SK-N-SH (cell line): ENCODE measurements at regions of chr11 and their contacts with region 1.

Region 1: DNA sequence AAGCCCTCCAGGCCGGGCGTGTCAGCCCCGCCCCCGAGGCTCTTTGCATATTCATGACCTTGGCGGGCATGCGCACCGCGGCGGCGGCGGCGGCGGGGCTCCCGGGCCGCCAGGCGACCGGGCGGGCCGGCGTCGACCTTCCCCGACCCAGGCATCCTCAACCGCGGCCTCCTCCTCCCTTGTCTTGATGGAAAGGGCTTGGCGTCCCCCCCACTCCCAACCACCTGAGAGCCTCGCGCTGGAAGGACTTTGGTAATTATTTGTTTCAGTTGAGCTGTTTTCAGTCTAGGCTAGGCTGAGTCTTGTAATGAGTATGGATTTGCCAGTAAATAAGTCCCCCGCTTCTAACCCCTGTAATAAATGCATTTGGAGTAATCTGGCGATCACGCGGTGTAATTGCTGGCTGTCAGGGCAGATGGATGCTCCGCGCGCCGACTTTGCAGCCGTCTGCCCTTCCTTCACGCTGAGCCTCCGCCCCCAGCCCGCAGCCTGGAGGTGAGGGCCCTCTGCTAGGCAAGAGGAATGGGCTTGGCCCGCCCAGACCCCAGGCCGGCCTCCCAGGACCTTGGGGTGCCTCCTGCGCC is 25.2 kb downstream of the FLRT1 start:
- DNase-seq: peak; percentile 81
- H3K4me3 ChIP-seq: peak overlapping the region; percentile 51 to 61
- H3K27ac ChIP-seq: peak overlapping the region in 1 of 2 experiments; percentile 98; a peak in 2 of 4 replicates
- H3K4me1 ChIP-seq: peaks cover 4 to 89% of the 10 kb centered on the region in 2 experiments; a peak in 3 of 4 replicates
- H3K27me3 ChIP-seq: no peaks in the 10 kb centered on the region
- CTCF ChIP-seq: no peak
- EP300 ChIP-seq: peak in 1 of 2 experiments; percentile 61; a peak in 2 of 4 replicates
- RAD21 ChIP-seq: no peak

Region 2: DNA sequence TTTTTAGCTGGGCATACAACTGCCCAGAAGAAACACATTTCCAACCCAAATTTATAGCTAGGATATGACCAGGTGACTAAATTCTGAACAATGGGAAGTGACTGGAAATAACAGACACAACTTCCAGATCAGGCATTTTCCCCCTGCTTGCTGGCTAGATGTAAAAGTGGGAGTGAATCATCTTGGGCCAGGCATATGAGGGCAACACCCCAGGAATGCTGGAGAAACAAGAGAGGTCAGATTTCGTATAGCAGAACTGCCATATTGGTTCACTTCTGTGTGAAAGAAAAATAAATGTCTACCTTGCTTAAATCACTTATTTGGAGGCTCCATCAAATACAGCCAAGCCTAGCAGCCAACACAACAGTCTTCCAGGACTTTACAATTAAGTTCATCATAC is 397.1 kb before region 1 on chr11:
- CTCF ChIA-PET with region 1: no interaction called
- POLR2A ChIA-PET with region 1: no interaction called
- DNase-seq: no peak
- H3K4me3 ChIP-seq: no peak overlapping the region
- H3K27ac ChIP-seq: peak overlapping the region; percentile 7 to 74; a peak in 3 of 4 replicates
- H3K4me1 ChIP-seq: peaks cover 0 to 35% of the 10 kb centered on the region in 2 experiments; a peak in 3 of 4 replicates
- H3K27me3 ChIP-seq: no peaks in the 10 kb centered on the region
- CTCF ChIP-seq: no peak
- EP300 ChIP-seq: no peak; a peak in 1 of 4 replicates
- RAD21 ChIP-seq: no peak

Region 3: GRCh38 chr11:63938479-63939396 is 122.2 kb before region 1 on chr11 and contains the start of gene NAA40:
- CTCF ChIA-PET with region 1: no interaction called
- POLR2A ChIA-PET with region 1: no interaction called
- DNase-seq: peak; percentile 99
- H3K4me3 ChIP-seq: peak within 1 kb of the TSS; percentile 69 to 79
- H3K27ac ChIP-seq: peak within 1 kb of the TSS; percentile 67 to 82
- H3K4me1 ChIP-seq: peaks cover 12% of the 10 kb centered on the region in 2 experiments; a peak in 2 of 4 replicates
- H3K27me3 ChIP-seq: no peaks in the 10 kb centered on the region
- CTCF ChIP-seq: no peak
- EP300 ChIP-seq: no peak; a peak in 1 of 4 replicates
- RAD21 ChIP-seq: no peak; the same call in 1 of the 2 replicates
- polyA plus RNA-seq, gene NAA40: 33.0 and 36.3 TPM in 2 replicates

Region 4: DNA sequence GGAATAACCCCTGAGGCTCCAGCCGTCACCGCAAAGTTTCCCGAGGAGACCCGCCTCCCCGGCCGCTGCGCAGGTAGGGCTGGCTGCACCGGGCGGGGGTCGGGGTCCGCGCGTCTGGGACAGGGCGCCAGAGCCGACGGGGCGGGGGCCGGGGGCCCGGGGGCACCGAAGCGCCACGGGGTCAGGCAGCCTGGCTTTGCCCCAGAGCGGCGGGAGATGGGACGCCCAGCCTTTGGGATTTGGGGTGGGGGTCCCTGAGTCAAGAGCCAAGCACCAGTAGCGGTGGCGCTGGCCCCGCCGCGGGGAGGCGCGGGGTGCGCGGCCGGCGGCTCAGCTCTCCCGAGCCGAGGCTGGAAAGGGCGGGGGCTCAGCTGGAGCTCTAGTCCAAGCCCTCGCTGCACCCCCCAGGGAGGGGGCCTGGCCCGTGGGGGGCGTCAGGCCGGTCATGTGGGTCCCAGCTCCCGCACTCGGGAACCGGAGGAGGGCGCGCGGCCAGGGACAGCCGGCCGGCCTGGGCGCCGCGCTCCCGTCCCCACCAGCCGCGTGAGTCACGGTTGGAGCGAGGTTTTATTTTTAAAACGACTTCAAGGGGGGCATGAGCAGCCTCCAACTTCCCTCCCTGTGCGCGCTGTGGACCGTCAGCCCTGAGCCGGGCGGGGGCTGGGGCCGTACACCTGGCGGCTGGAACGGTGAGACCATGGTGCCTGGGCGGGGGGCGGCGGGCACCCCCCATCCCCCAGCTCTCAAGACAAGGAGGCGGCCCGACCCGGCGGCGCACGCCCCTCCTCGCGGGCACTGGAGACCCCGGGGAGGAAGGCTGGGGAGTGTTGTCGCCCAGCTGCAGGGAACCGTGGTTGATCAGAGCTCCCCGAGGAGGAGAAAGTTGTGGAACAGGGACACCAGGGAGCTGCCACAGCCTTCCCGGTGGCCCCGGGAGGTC is 24.6 kb before region 1 on chr11:
- CTCF ChIA-PET with region 1: interaction called, 12 read pairs
- POLR2A ChIA-PET with region 1: interaction called, 5 read pairs
- DNase-seq: peak; percentile 73
- H3K4me3 ChIP-seq: peak overlapping the region; percentile 58 to 62
- H3K27ac ChIP-seq: peak overlapping the region in 1 of 2 experiments; percentile 84; a peak in 2 of 4 replicates
- H3K4me1 ChIP-seq: peaks cover 3 to 59% of the 10 kb centered on the region in 2 experiments; a peak in 2 of 4 replicates
- H3K27me3 ChIP-seq: no peaks in the 10 kb centered on the region
- CTCF ChIP-seq: peak; percentile 29; the same call in 1 of the 2 replicates
- EP300 ChIP-seq: no peak
- RAD21 ChIP-seq: peak; percentile 9; the same call in 1 of the 2 replicates

Region 5: GRCh38 chr11:64074239-64074638 is 13.3 kb after region 1 on chr11:
- CTCF ChIA-PET with region 1: interaction called, 3 read pairs
- POLR2A ChIA-PET with region 1: interaction called, 14 read pairs
- DNase-seq: no peak
- H3K4me3 ChIP-seq: no peak overlapping the region
- H3K27ac ChIP-seq: peak overlapping the region in 1 of 2 experiments; percentile 81; a peak in 1 of 4 replicates
- H3K4me1 ChIP-seq: peaks cover 11 to 90% of the 10 kb centered on the region in 2 experiments; a peak in 2 of 4 replicates
- H3K27me3 ChIP-seq: no peaks in the 10 kb centered on the region
- CTCF ChIP-seq: no peak
- EP300 ChIP-seq: no peak
- RAD21 ChIP-seq: no peak

Region 6: DNA sequence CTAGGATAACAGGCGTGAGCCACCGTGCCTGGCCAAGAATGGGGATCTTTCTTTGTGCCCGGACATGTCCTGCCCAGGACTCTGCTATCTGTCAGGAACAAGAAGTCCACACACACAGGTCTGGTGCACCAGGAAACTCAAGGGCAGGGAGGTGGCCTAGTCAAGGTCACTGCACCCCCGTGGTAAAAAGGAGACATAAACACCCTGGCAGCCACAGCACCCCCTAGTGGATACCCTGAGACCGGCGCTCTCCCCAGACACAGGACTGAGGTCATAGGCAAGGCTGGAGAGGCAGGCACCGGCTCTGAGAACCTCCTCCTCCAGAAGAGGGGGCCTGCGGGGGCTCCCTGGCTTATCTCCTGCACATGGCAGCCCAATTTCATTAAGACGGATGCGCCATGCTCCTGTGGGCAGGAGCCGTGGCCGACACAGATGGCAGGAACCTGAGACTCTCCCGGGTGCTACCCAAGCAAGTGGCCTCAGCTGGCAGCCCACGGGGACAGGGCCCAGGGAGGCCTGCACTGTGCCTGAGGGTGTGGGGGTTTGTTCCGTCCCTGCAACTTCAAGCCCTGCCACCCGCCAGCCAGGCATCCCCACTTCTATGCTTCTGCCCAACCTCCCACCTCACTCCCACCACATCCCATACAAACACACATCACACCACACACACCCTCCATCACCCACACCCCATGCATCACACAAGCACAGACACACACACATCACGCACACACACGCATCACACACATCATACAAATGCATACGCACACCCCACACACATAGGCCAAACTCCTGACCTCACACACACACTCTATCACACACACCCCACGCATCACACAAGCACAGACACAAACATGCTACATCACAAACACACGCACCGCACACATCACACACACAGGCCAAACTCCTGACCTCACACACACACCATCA is 85.3 kb after region 1 on chr11:
- CTCF ChIA-PET with region 1: interaction called, 10 read pairs
- POLR2A ChIA-PET with region 1: interaction called, 6 read pairs
- DNase-seq: peak; percentile 87
- H3K4me3 ChIP-seq: no peak overlapping the region; a peak in 1 of 4 replicates
- H3K27ac ChIP-seq: peak overlapping the region in 1 of 2 experiments; percentile 93; a peak in 2 of 4 replicates
- H3K4me1 ChIP-seq: peaks cover 0 to 78% of the 10 kb centered on the region in 2 experiments; a peak in 2 of 4 replicates
- H3K27me3 ChIP-seq: no peaks in the 10 kb centered on the region
- CTCF ChIP-seq: peak; percentile 76
- EP300 ChIP-seq: peak in 1 of 2 experiments; percentile 94; a peak in 2 of 4 replicates
- RAD21 ChIP-seq: peak; percentile 67